Activated naive CD4-positive, alpha-beta T cell treated with anti-CD3 and anti-CD28 coated beads for 36 hours (primary cell): ENCODE measurements at regions of chr10 and their contacts with region 1.

Region 1: DNA sequence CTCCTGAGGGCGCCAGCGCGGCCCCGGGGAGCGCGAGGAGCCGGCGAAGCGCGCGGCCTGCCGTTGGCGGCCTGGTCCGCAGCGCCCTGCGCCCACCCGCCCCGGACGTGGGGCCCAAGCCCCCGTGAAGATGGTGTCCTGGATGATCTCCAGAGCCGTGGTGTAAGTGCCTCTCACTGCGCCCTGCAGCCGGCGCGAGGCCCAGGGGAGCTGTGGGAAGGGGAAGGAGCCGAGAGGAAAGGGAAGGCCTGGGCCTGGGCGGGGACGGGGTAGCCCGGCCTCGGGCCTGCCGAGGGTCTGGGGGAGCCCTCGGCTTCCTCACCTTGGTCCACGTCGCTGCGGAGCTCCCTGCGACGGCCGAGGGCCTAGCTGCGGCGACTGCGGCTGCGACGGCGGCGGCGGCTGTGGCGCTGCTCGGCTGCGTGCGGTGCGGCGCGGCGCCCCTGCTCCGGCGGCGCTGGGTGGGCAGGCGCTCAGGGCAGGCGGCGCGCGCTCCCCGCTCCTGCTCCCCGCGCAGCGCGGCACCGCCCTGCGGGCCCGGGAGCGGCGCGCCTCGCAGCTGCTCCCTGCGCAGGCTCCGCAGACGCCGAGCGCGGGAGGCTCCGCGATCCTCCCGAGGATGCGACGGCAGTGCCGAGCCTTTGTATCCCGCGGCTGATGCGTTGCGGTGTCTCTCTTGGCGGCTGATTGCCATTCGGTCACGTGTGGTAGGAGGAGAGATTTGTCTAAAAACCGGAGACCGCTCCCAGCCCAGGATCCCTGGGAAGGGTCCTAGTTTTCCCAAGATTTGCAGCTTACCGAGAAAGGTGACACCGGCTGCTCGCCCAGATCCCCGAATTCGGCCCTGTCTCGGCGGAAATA is 445 bp downstream of the REEP3 start:
- DNase-seq: peak; percentile 59
- H3K4me3 Mint-ChIP-seq: peak overlapping the region; percentile 84
- H3K27ac Mint-ChIP-seq: peak overlapping the region; percentile 86
- H3K4me1 Mint-ChIP-seq: peaks cover 66% of the 10 kb centered on the region
- H3K27me3 Mint-ChIP-seq: no peaks in the 10 kb centered on the region

Region 2: DNA sequence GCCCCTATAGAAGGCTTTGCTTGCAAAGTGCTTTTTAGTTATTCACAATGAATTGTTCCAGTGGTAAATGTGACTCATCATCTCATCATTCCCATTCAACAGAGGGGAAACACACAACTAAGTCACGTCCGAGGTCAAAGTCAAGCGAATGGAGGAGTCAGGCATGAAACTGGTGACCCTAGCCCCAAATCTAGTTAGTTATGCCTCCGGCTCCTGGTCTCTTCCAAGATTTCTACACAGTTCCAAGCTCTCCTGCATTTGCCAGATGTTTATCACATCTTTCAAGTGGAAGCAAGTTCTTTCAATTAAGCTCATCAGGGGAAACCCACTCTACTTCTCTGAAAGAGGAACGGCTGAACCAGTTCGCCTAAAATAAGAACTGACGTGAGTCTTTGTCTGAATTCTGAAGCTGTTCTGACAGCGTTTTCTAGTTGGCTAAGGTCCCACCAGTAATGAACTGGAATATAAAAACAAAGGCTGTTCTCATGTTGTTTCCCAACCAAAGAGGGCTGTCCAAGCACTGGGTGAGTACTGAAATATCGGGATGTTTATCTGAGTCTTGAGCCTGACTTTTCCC is 529.4 kb before region 1 on chr10:
- CTCF ChIA-PET with region 1: no interaction called
- intact Hi-C with region 1: loop called (anchors 10 kb)
- DNase-seq: peak; percentile 24
- H3K4me3 Mint-ChIP-seq: peak overlapping the region; percentile 1
- H3K27ac Mint-ChIP-seq: peak overlapping the region; percentile 71
- H3K4me1 Mint-ChIP-seq: peaks cover 43% of the 10 kb centered on the region
- H3K27me3 Mint-ChIP-seq: peaks cover 3% of the 10 kb centered on the region

Region 3: DNA sequence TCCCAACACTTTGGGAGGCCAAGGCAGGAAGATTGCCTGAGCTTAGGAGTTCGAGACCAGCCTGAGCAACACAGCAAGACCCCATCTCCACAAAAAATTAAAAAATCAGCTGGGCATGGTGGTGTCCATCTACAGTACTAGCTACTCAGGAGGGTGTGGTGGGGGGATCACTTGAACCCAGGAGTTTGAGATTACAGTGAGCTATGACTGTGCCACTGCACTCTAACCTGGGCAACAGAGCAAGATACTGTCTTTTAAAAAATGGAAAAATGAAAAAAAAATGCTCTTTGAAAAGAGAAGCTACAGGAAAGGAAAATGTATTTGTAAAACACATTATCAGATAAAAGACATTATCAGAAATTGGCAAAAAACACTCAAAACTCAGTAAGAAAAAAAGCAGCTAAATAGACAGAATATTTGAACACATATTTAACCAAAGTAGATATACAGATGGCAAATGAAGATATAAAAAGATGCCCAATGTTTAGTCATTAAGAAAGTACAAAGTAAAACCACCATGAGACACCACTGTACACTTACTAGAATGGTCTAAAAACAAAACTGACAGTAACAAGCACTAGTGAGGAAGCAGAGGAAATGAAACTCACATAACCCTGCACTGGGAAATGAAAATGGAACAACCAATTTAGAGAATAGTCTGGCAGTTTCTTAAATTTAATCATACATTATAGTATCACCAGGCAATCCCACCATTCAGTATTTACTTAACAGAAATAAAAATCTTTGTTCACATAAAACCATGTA is 348.0 kb before region 1 on chr10:
- CTCF ChIA-PET with region 1: interaction called, 3 read pairs
- intact Hi-C with region 1: loop called (anchors 2 kb)
- DNase-seq: peak; percentile 18
- H3K4me3 Mint-ChIP-seq: no peak overlapping the region
- H3K27ac Mint-ChIP-seq: peak overlapping the region; percentile 71
- H3K4me1 Mint-ChIP-seq: peaks cover 62% of the 10 kb centered on the region
- H3K27me3 Mint-ChIP-seq: no peaks in the 10 kb centered on the region

Region 4: GRCh38 chr10:63227207-63227915 is 294.3 kb before region 1 on chr10:
- CTCF ChIA-PET with region 1: no interaction called
- intact Hi-C with region 1: loop called (anchors 2 kb)
- DNase-seq: no peak
- H3K4me3 Mint-ChIP-seq: no peak overlapping the region
- H3K27ac Mint-ChIP-seq: peak overlapping the region; percentile 97
- H3K4me1 Mint-ChIP-seq: peaks cover 56% of the 10 kb centered on the region
- H3K27me3 Mint-ChIP-seq: no peaks in the 10 kb centered on the region

Region 5: GRCh38 chr10:63537536-63537935 is 15.9 kb after region 1 on chr10:
- CTCF ChIA-PET with region 1: interaction called, 3 read pairs
- intact Hi-C with region 1: loop called (anchors 2 kb)
- DNase-seq: no peak
- H3K4me3 Mint-ChIP-seq: no peak overlapping the region
- H3K27ac Mint-ChIP-seq: no peak overlapping the region
- H3K4me1 Mint-ChIP-seq: peaks cover 14% of the 10 kb centered on the region
- H3K27me3 Mint-ChIP-seq: no peaks in the 10 kb centered on the region

Region 6: DNA sequence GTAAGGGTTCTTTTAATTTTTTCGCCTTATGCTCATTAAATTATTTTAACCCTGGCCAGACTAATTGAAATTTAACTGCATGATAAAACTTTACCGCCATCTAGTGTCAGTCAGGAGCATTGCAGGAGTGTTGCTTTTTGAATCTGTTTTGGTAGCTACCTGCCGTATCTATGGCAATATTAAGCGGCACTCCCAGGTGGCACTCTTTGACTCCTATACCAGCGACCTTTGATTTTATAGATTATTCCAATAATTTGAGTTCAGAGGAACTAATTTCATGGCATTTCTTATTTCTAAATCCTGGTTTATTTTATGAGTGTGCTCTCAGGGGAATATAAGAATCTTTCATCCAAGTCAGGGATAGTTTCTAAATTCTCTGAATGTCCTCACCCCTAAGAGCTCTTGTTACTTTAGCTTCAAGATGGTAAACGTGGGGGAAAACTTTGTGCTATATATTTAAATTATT is 198.5 kb after region 1 on chr10:
- CTCF ChIA-PET with region 1: interaction called, 5 read pairs
- intact Hi-C with region 1: loop called (anchors 5 kb)
- DNase-seq: peak; percentile 67
- H3K4me3 Mint-ChIP-seq: no peak overlapping the region
- H3K27ac Mint-ChIP-seq: no peak overlapping the region
- H3K4me1 Mint-ChIP-seq: peaks cover 10% of the 10 kb centered on the region
- H3K27me3 Mint-ChIP-seq: peaks cover 4% of the 10 kb centered on the region

Region 7: GRCh38 chr10:63929826-63930467 is 408.3 kb after region 1 on chr10:
- CTCF ChIA-PET with region 1: no interaction called
- intact Hi-C with region 1: no loop called
- DNase-seq: no peak
- H3K4me3 Mint-ChIP-seq: no peak overlapping the region
- H3K27ac Mint-ChIP-seq: no peak overlapping the region
- H3K4me1 Mint-ChIP-seq: no peaks in the 10 kb centered on the region
- H3K27me3 Mint-ChIP-seq: peaks cover 8% of the 10 kb centered on the region